A673 (cell line): ENCODE measurements at regions of chrX and their contacts with region 1.

Region 1: DNA sequence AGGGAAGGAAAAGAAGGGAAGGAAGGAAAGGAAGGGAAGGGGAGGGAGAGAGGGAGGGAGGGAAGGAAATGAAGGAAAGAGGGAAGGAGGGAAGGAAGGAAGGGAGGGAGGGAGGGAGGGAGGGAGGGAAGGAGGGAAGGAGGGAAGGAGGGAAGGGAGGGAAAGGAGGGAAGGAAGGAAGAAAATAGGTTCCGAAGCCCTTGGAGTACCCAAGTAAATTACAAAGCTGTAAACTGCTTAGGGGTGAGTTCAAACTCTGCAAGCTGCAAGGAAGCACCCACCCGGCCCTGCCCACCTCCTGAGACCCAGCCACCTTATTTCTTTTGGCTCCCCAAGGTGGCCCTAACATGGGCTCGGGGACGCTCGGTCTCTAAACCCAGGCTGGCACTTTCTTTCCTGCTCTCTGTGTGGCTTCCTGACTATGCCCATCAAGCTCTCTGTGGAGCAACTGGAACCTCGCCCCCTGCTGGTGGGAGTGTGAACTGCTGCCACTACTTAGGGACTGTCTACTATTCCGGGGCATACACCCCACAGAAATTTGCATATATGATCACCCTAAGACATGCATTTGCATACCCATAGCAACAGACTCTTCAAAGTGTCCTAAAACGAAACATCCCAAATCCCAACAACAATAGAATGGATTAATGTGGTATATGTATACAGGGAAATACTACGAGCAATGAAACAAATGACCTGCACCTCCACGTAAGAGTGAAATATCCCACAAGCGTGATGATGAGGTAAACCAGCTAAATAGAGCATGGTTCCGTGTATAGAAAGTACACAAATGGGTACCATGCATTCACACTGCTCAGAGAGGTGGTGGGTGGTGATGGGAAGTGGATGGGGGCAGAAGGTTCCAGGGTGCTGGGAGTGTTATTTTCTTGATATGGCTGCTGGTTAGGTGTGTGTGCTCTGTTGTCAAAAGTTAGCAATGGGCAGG is 151.7 kb upstream of the TBL1X start:
- DNase-seq: peak; percentile 65
- H3K4me3 ChIP-seq: no peak overlapping the region
- H3K27ac ChIP-seq: no peak overlapping the region
- H3K4me1 ChIP-seq: no peaks in the 10 kb centered on the region
- H3K27me3 ChIP-seq: no peaks in the 10 kb centered on the region
- CTCF ChIP-seq: peak; percentile 87

Region 2: GRCh38 chrX:8971116-8971515 is 342.1 kb before region 1 on chrX:
- CTCF ChIA-PET with region 1: interaction called, 4 read pairs
- POLR2A ChIA-PET with region 1: no interaction called
- intact Hi-C with region 1: loop called (anchors 10 kb)
- DNase-seq: peak; percentile 60
- H3K4me3 ChIP-seq: no peak overlapping the region
- H3K27ac ChIP-seq: no peak overlapping the region
- H3K4me1 ChIP-seq: no peaks in the 10 kb centered on the region
- H3K27me3 ChIP-seq: no peaks in the 10 kb centered on the region
- CTCF ChIP-seq: peak; percentile 52; the same call in 1 of the 2 replicates

Region 3: GRCh38 chrX:9231491-9231890 is 81.7 kb before region 1 on chrX:
- CTCF ChIA-PET with region 1: no interaction called
- POLR2A ChIA-PET with region 1: no interaction called
- intact Hi-C with region 1: no loop called
- DNase-seq: no peak
- H3K4me3 ChIP-seq: no peak overlapping the region
- H3K27ac ChIP-seq: no peak overlapping the region
- H3K4me1 ChIP-seq: no peaks in the 10 kb centered on the region
- H3K27me3 ChIP-seq: no peaks in the 10 kb centered on the region
- CTCF ChIP-seq: no peak